BJ (cell line): ENCODE measurements at regions of chr20 and their contacts with region 1.

Region 1: GRCh38 chr20:21235484-21236445 is 67.4 kb upstream of the XRN2 start:
- DNase-seq: peak; percentile 8
- H3K4me3 ChIP-seq: no peak overlapping the region
- H3K27me3 ChIP-seq: no peaks in the 10 kb centered on the region
- CTCF ChIP-seq: peak; percentile 91

Region 2: DNA sequence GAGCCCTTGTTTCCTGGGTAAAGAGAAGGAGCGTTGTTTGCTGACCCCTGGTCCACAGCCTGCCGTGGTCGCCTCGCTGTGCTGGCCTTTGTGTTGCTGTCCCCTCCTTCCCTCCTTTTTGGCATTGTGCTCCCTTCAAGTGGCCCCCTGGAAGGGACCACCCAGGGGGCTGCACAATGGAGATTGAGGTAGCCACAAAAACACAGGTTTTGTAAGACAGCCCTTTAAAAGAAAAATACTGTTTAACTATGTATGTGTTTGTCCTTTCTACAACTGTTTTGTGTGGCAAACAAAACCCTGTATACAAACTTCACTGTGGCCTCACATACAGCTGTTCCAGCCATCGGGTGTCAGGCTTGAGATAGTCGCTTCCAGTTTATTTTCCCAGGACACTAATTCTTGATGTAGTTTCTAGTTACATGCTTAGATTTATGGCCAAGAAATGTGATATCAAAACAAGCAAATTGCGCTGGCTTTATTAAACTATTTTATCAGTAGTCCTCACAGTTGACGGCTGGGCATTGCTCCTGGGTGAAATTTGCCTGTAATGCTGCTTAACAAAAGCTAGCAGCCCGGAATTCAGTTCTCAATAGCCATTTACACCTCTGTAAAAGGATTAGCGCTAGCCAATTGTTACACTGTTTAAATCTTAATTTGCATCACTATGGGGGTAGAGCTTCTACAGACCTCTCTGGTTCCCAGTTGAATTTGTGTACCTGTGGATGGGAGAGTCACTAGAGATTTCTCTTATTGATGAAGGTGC is 45.8 kb before region 1 on chr20:
- CTCF ChIA-PET with region 1: no interaction called
- POLR2A ChIA-PET with region 1: no interaction called
- DNase-seq: no peak
- H3K4me3 ChIP-seq: no peak overlapping the region
- H3K27me3 ChIP-seq: no peaks in the 10 kb centered on the region
- CTCF ChIP-seq: no peak

Region 3: DNA sequence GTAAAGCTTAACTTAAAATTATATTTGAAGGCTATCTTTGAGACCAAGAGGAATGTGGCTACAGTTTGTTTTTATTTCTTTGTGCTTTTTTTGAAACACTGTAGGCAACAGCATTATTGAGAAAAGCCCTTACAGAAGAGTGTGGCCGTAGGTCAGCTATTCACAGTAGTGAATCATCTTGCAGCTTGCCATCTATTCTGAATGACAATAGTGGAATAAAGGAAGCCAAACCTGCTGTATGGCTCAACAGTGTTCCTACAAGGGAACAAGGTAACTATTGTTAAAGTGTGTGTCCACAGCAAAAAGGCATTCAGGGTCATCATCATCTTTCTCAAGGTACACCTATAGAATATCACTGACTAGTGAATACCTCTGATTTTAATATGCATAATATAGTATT is 21.3 kb before region 1 on chr20:
- CTCF ChIA-PET with region 1: interaction called, 26 read pairs
- POLR2A ChIA-PET with region 1: interaction called, 3 read pairs
- DNase-seq: no peak
- H3K4me3 ChIP-seq: no peak overlapping the region
- H3K27me3 ChIP-seq: no peaks in the 10 kb centered on the region
- CTCF ChIP-seq: no peak

Region 4: GRCh38 chr20:21246161-21246560 is 10.4 kb after region 1 on chr20:
- CTCF ChIA-PET with region 1: interaction called, 16 read pairs
- POLR2A ChIA-PET with region 1: no interaction called
- DNase-seq: no peak
- H3K4me3 ChIP-seq: no peak overlapping the region
- H3K27me3 ChIP-seq: no peaks in the 10 kb centered on the region
- CTCF ChIP-seq: no peak

Region 5: GRCh38 chr20:21269772-21270171 is 34.0 kb after region 1 on chr20:
- CTCF ChIA-PET with region 1: interaction called, 10 read pairs
- POLR2A ChIA-PET with region 1: no interaction called
- DNase-seq: no peak
- H3K4me3 ChIP-seq: no peak overlapping the region
- H3K27me3 ChIP-seq: peaks cover 2% of the 10 kb centered on the region; the same call in 1 of the 2 replicates
- CTCF ChIP-seq: no peak

Region 6: DNA sequence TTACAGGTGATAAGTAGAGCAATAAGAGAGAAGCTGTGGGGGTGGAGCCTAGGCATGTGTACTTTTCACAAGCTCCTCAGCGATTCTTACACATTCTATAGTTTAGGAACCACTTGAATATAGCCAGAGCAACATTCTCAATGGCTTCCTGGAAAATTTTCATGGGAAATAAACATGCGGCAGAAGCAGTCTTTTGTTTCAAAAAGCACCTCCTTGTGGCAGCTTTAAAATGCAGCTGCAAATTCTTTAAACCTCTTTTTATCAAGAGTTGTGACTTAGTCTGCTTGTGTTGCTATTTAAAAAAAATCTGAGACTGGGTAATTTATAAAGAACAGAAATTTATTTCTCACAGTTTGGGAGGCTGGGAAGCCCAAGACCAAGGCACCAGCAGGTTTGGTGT is 254.3 kb after region 1 on chr20:
- CTCF ChIA-PET with region 1: interaction called, 208 read pairs
- POLR2A ChIA-PET with region 1: no interaction called
- DNase-seq: no peak
- H3K4me3 ChIP-seq: no peak overlapping the region
- H3K27me3 ChIP-seq: peaks cover 3% of the 10 kb centered on the region
- CTCF ChIP-seq: peak; percentile 28; the same call in 1 of the 2 replicates

Region 7: DNA sequence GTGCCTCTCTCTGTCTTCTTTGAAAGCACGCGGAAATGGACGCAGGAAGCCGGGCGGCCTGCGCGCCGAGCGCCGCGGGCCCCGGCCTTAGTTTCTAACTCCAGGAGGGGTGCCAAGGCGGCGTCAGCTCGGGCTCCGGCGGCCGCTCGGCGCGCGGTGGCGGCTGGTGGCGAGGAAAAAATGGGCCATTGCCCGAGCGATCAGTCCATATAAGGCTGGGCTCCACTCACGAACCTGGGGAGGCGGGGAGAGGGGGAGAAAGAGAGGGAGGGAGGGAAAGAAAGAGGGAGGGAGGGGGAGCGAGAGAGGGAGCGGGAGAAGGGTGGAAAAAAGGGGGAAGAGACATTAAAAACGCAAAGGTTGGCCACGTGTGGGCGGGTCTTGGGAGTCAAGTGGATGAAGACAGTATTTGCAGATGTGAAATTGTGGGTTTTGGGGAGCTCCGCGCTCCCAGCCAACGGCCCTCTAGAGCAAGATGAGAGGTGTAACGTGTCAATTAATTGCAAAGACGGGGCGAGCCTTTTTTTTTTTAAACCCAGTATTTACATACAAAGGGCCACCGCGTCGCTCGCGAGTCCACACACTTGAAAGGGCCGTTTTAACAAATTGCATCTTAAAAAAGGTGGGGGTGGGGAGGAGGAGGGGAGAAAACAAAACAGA is 278.2 kb after region 1 on chr20 and contains the start of gene NKX2-2:
- CTCF ChIA-PET with region 1: interaction called, 208 read pairs
- POLR2A ChIA-PET with region 1: no interaction called
- DNase-seq: no peak
- H3K4me3 ChIP-seq: no peak within 1 kb of the TSS
- H3K27me3 ChIP-seq: peaks cover 70% of the 10 kb centered on the region
- CTCF ChIP-seq: no peak
- polyA plus RNA-seq, gene NKX2-2: not detected in 2 replicates